MCF 10A (cell line): ENCODE measurements at regions of chr16 and their contacts with region 1.

Region 1: DNA sequence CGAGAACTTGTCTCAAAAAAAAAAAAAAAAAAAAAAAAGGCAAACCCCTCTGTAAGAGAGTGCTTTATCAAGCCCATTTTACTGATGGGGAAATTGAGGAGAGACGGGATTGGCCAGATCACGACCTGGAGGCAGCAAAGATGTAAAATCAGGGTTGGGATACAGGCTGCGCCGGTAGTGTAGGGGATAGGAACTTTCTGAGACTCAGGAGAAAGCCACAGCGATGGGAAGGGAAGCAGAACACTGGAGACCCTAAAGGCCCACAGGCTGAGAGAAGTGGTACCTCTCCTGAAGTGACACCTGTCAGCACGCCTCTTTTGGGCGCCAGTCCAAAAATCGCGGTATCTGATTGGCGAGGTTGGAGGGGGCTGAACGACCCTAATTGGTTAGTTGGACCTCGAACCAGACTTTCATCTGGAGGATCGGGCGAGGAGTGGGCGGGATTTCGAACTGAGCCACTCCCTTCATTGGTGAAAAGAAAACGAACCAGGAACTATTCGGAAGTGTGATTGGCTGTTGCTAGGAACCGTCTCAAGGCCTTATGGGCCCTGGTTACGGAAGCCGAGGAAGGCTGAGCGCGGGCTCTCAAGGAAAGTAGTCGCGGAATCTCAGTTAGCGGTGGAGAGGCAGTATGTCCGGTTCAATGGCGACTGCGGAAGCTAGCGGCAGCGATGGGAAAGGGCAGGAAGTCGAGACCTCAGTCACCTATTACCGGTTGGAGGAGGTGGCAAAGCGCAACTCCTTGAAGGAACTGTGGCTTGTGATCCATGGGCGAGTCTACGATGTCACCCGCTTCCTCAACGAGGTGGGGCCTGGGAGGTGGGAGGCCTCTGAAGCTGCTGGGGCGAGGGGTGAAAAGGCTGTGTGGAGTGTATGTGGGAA is at the start of gene CYB5B:
- DNase-seq: peak; percentile 99
- H3K4me3 Mint-ChIP-seq: peak within 1 kb of the TSS; percentile 87
- H3K27ac Mint-ChIP-seq: peak within 1 kb of the TSS; percentile 91
- H3K4me1 Mint-ChIP-seq: no peaks in the 10 kb centered on the region
- H3K27me3 Mint-ChIP-seq: no peaks in the 10 kb centered on the region
- CTCF ChIP-seq: no peak
- total RNA-seq, gene CYB5B: 112 and 118 TPM in 2 replicates

Region 2: DNA sequence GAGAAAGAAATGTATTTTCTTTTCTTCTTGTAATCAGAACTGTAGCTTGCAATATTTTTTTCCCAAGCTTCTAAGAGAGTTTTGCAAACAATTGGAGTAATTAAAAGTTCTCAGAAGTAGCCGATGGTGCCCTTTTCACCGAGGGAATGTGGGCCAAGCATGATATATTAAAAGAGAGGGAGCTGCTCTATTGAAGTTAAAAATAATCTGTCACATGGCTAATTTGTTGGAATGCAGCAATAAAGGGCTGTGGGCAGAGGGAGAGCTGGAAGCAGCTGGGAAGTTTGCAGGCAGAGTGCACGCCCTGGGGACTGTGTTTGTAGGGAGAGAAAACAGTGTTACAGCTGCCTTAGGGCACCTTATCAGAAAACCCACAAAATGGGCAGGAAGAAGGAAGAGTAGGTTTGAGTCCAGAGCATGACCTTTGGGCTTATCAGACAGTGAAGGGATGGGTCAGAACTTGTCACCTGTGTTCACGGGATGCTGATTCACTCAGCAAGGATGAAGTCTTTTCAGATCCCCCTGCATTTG is 20.0 kb before region 1 on chr16:
- CTCF ChIA-PET with region 1: no interaction called
- POLR2A ChIA-PET with region 1: interaction called, 27 read pairs
- intact Hi-C with region 1: no loop called
- DNase-seq: peak; percentile 24
- H3K4me3 Mint-ChIP-seq: no peak overlapping the region
- H3K27ac Mint-ChIP-seq: no peak overlapping the region
- H3K4me1 Mint-ChIP-seq: peaks cover 21% of the 10 kb centered on the region
- H3K27me3 Mint-ChIP-seq: no peaks in the 10 kb centered on the region
- CTCF ChIP-seq: no peak

Region 3: DNA sequence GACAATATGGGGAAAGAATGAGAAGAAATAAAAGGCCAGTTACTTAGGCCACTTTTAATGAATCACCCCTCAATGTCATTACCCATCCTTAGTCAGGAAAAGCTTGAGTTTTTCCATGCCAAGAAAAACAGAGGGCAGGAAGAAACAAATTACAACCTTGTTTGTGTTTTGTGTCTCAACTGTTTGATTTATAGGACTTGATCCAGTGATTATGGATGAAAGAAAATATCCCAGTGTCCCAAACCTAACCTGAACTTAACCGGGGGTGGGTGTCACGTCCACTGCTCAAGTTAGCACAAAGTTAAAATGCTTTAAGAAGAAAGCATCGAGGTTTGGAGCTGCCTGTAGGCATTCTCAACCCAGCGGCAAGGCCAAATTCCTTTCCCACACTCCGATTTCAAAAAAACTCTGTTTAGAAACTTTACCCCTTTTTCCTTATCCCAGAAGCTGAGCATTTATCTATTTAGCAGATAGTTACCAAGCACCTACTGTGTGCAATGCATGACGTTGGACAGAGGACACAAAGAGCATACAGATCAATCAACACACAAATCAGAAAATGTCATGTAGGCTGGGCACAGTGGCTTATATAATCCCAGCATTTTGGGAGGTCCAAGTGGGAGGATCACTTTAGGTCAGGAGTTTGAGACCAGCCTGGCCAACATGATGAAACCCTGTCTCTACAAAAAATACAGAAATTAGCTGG is 13.9 kb before region 1 on chr16:
- CTCF ChIA-PET with region 1: no interaction called
- POLR2A ChIA-PET with region 1: interaction called, 27 read pairs
- intact Hi-C with region 1: no loop called
- DNase-seq: peak; percentile 85
- H3K4me3 Mint-ChIP-seq: peak overlapping the region; percentile 24
- H3K27ac Mint-ChIP-seq: peak overlapping the region; percentile 58
- H3K4me1 Mint-ChIP-seq: peaks cover 28% of the 10 kb centered on the region
- H3K27me3 Mint-ChIP-seq: no peaks in the 10 kb centered on the region
- CTCF ChIP-seq: no peak

Region 4: GRCh38 chr16:69443927-69444631 is 19.8 kb after region 1 on chr16:
- CTCF ChIA-PET with region 1: no interaction called
- POLR2A ChIA-PET with region 1: interaction called, 25 read pairs
- intact Hi-C with region 1: no loop called
- DNase-seq: no peak
- H3K4me3 Mint-ChIP-seq: peak overlapping the region; percentile 50
- H3K27ac Mint-ChIP-seq: peak overlapping the region; percentile 80
- H3K4me1 Mint-ChIP-seq: peaks cover 16% of the 10 kb centered on the region
- H3K27me3 Mint-ChIP-seq: no peaks in the 10 kb centered on the region
- CTCF ChIP-seq: no peak